GM12878 (cell line): ENCODE measurements at regions of chr6 and their contacts with region 1.

Region 1: DNA sequence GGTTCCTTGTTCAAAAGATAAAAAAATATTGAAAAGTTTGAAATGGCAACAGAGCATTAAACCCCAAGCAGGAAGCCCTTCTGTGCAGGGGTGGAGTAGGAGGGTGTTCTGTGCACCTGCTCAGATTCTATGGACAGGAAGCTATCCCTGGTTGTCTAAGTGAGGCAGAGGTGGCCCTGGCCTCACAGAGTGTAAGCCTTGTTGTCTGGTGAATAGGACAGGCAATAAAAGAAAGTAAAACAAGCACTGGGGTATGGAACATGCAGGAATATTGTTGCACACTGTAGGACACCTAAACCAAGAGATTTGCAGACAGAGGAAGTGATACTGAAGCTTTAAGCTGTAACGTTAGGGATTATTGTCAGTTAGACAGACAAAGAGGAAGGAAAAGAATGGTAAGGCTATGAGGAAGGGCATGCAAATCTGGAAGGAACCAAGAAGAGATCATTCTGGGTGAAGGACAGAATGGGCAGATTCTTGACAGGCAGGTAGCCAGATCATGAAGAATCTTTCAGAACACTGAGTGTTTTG is 66.8 kb downstream of the TBC1D7 start:
- DNase-seq: peak; percentile 80
- ATAC-seq: peak; percentile 57
- H3K4me3 ChIP-seq: peak overlapping the region; percentile 52; the same call in 1 of the 2 replicates
- H3K27ac ChIP-seq: peak overlapping the region; percentile 50
- H3K4me1 ChIP-seq: peaks cover 59% of the 10 kb centered on the region
- H3K27me3 ChIP-seq: no peaks in the 10 kb centered on the region
- CTCF ChIP-seq: no peak
- EP300 ChIP-seq: peak in 1 of 2 experiments; percentile 63; a peak in 1 of 4 replicates
- POLR2A ChIP-seq: peak; percentile 7; the same call in 1 of the 2 replicates
- RAD21 ChIP-seq: no peak; the same call in 1 of the 2 replicates

Region 2: GRCh38 chr6:13239530-13240455 is 21.7 kb before region 1 on chr6:
- CTCF ChIA-PET with region 1: interaction called, 5 read pairs
- POLR2A ChIA-PET with region 1: interaction called, 11 read pairs
- RAD21 ChIA-PET with region 1: interaction called, 25 read pairs
- SMC1A ChIA-PET with region 1: interaction called, 20 read pairs
- in situ Hi-C with region 1: no loop called
- intact Hi-C with region 1: no loop called
- DNase-seq: no peak
- ATAC-seq: peak; percentile 35
- H3K4me3 ChIP-seq: no peak overlapping the region
- H3K27ac ChIP-seq: no peak overlapping the region
- H3K4me1 ChIP-seq: no peaks in the 10 kb centered on the region
- H3K27me3 ChIP-seq: no peaks in the 10 kb centered on the region
- CTCF ChIP-seq: no peak
- EP300 ChIP-seq: no peak
- POLR2A ChIP-seq: no peak
- RAD21 ChIP-seq: no peak

Region 3: GRCh38 chr6:13272131-13273046 is 10.9 kb after region 1 on chr6:
- CTCF ChIA-PET with region 1: interaction called, 45 read pairs
- POLR2A ChIA-PET with region 1: interaction called, 26 read pairs
- RAD21 ChIA-PET with region 1: interaction called, 116 read pairs
- SMC1A ChIA-PET with region 1: interaction called, 81 read pairs
- in situ Hi-C with region 1: no loop called
- intact Hi-C with region 1: loop called (anchors 1 kb)
- DNase-seq: peak; percentile 67
- ATAC-seq: peak; percentile 72
- H3K4me3 ChIP-seq: peak overlapping the region; percentile 82
- H3K27ac ChIP-seq: peak overlapping the region; percentile 92
- H3K4me1 ChIP-seq: peaks cover 20% of the 10 kb centered on the region
- H3K27me3 ChIP-seq: no peaks in the 10 kb centered on the region; a peak in 1 of 4 replicates
- CTCF ChIP-seq: peak in 2 of 3 experiments; percentile 20 to 37; a peak in 3 of 6 replicates
- EP300 ChIP-seq: peak; percentile 53 to 72; a peak in 1 of 4 replicates
- POLR2A ChIP-seq: peak; percentile 86
- RAD21 ChIP-seq: peak; percentile 44; the same call in 1 of the 2 replicates

Region 4: DNA sequence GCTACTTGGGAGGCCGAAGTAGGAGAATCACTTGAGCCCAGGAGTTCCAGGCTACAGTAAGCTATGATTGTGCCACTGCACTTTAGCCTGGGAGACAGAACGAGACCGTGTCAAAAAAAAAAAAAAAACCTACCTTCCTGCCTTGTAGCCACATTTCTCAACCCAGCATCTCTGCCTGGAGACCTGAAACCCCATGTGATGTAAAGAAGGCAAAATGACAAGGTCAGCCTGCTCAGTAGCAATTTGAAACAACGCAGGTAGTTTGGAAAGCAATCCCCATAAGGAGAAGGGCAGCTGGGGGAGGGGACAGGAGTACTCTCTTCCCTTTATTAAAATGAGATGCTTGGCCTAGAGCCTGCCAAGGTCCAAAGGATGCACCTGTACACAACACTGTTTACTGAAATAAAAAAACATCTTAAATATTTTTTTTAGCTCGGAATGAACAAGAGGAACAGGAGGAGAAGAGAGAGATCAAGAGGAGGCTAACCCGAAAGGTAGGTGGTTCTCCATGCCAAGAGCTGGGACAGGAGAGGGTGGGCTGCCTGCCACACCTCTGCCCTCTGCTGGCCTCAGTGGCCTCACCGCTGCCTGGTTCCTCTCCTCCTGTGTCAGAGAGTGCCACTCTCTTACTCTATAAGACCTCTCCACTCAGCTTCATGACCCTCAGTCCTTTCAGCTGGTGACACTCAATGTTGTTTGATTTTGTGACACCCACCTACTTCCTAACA is 16.5 kb after region 1 on chr6:
- CTCF ChIA-PET with region 1: interaction called, 45 read pairs
- POLR2A ChIA-PET with region 1: interaction called, 26 read pairs
- RAD21 ChIA-PET with region 1: interaction called, 116 read pairs
- SMC1A ChIA-PET with region 1: interaction called, 81 read pairs
- in situ Hi-C with region 1: no loop called
- intact Hi-C with region 1: no loop called
- DNase-seq: no peak
- ATAC-seq: peak; percentile 53
- H3K4me3 ChIP-seq: no peak overlapping the region
- H3K27ac ChIP-seq: no peak overlapping the region
- H3K4me1 ChIP-seq: peaks cover 33% of the 10 kb centered on the region
- H3K27me3 ChIP-seq: no peaks in the 10 kb centered on the region; a peak in 1 of 4 replicates
- CTCF ChIP-seq: peak; percentile 57 to 69 (median 58)
- EP300 ChIP-seq: no peak
- POLR2A ChIP-seq: no peak
- RAD21 ChIP-seq: peak; percentile 58

Region 5: DNA sequence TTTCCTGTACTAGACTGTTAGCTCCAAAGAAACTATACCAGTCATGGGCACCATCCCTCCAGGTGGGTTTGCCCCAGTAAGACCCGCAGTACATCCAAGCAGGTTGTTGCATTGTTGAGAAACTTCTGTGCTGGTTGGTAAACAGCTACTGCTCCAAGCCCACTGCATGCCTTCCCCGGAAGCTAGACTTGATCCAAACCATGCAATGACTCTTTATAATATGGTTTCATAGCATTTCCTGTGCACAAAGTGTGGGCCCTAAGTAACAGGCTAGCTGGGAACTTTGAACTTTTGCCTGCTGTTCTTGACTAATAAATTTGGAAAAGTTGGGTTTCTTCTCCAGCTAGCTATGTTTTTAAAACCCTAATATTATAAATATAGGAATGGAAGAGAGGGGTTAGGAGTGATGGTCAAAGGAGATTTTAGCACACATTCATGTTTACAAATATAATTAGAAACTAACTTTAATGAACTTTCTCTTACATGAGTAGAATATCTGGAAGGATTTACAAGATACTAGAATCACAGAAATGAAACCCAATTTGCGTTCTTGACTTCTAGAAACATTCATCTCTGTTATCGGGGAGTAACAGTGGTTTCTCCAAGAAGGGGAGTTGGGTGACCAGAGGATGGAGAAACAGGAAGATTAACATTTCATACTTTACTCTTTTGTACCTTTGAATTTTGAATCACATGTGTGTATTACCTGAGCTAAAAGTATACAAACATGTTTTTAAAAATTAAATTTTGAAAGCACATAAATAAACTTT is 174.1 kb after region 1 on chr6:
- CTCF ChIA-PET with region 1: no interaction called
- POLR2A ChIA-PET with region 1: no interaction called
- RAD21 ChIA-PET with region 1: no interaction called
- SMC1A ChIA-PET with region 1: no interaction called
- in situ Hi-C with region 1: no loop called
- intact Hi-C with region 1: no loop called
- DNase-seq: no peak
- ATAC-seq: no peak
- H3K4me3 ChIP-seq: no peak overlapping the region
- H3K27ac ChIP-seq: peak overlapping the region; percentile 35; the same call in 1 of the 2 replicates
- H3K4me1 ChIP-seq: peaks cover 44% of the 10 kb centered on the region
- H3K27me3 ChIP-seq: no peaks in the 10 kb centered on the region
- CTCF ChIP-seq: no peak
- EP300 ChIP-seq: no peak
- POLR2A ChIP-seq: no peak
- RAD21 ChIP-seq: no peak